GM12878 (cell line): ENCODE measurements at regions of chrX and their contacts with region 1.

Region 1: DNA sequence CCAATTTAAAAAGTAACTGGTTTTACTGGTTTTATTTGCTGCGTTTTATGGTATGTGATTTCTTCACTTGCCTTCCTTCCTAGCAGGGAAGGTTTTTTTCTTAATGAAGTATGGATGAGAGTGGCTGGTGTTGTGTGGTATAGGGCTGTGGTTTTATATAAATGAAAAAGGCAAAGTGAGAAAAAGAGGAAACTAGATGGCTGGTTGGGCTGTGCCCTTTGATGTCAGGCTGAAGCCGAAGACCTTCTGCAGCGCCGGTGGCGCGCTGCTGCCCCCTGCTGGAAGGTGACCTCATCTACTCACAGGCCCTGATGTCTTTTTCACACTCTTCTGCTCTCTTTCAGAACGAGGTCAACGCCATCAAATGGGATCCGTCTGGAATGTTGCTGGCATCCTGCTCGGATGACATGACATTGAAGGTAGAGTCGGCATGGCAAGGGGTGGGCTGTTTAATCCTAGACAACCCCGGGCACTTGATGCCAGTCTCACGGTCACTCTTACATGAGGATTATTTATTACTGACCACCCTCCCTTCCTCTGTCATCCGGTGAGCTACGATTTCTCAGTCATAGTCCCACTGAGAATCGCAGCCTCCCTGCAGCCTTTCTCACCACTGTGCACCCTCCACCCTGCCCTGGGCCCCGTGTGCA is 56.6 kb downstream of the GPR143 start:
- DNase-seq: peak; percentile 42
- ATAC-seq: peak; percentile 95
- H3K4me3 ChIP-seq: no peak overlapping the region
- H3K27ac ChIP-seq: no peak overlapping the region
- H3K4me1 ChIP-seq: no peaks in the 10 kb centered on the region
- H3K27me3 ChIP-seq: no peaks in the 10 kb centered on the region
- CTCF ChIP-seq: peak; percentile 81 to 91 (median 83)
- EP300 ChIP-seq: no peak
- POLR2A ChIP-seq: no peak
- RAD21 ChIP-seq: peak; percentile 91

Region 2: GRCh38 chrX:7996414-7996813 is 1712.6 kb before region 1 on chrX:
- CTCF ChIA-PET with region 1: no interaction called
- POLR2A ChIA-PET with region 1: no interaction called
- RAD21 ChIA-PET with region 1: no interaction called
- SMC1A ChIA-PET with region 1: no interaction called
- in situ Hi-C with region 1: loop called (anchors 25 kb)
- intact Hi-C with region 1: no loop called
- DNase-seq: no peak
- ATAC-seq: peak; percentile 91
- H3K4me3 ChIP-seq: no peak overlapping the region
- H3K27ac ChIP-seq: no peak overlapping the region
- H3K4me1 ChIP-seq: no peaks in the 10 kb centered on the region
- H3K27me3 ChIP-seq: no peaks in the 10 kb centered on the region
- CTCF ChIP-seq: peak; percentile 44 to 75 (median 54); a peak in 5 of 6 replicates
- EP300 ChIP-seq: no peak
- POLR2A ChIP-seq: no peak
- RAD21 ChIP-seq: peak; percentile 84

Region 3: GRCh38 chrX:8820910-8821527 is 888.0 kb before region 1 on chrX:
- CTCF ChIA-PET with region 1: interaction called, 5 read pairs
- POLR2A ChIA-PET with region 1: no interaction called
- RAD21 ChIA-PET with region 1: no interaction called
- SMC1A ChIA-PET with region 1: interaction called, 5 read pairs
- in situ Hi-C with region 1: loop called (anchors 5 kb)
- intact Hi-C with region 1: loop called (anchors 1 kb)
- DNase-seq: no peak
- ATAC-seq: no peak
- H3K4me3 ChIP-seq: no peak overlapping the region
- H3K27ac ChIP-seq: no peak overlapping the region
- H3K4me1 ChIP-seq: no peaks in the 10 kb centered on the region
- H3K27me3 ChIP-seq: no peaks in the 10 kb centered on the region
- CTCF ChIP-seq: no peak
- EP300 ChIP-seq: no peak
- POLR2A ChIP-seq: no peak
- RAD21 ChIP-seq: no peak

Region 4: GRCh38 chrX:9352694-9353411 is 356.2 kb before region 1 on chrX:
- CTCF ChIA-PET with region 1: interaction called, 4 read pairs
- POLR2A ChIA-PET with region 1: no interaction called
- RAD21 ChIA-PET with region 1: no interaction called
- SMC1A ChIA-PET with region 1: no interaction called
- in situ Hi-C with region 1: loop called (anchors 10 kb)
- intact Hi-C with region 1: loop called (anchors 5 kb)
- DNase-seq: peak; percentile 38
- ATAC-seq: peak; percentile 87
- H3K4me3 ChIP-seq: peak overlapping the region; percentile 15; the same call in 1 of the 2 replicates
- H3K27ac ChIP-seq: peak overlapping the region; percentile 79
- H3K4me1 ChIP-seq: peaks cover 5% of the 10 kb centered on the region; the same call in 1 of the 2 replicates
- H3K27me3 ChIP-seq: no peaks in the 10 kb centered on the region
- CTCF ChIP-seq: no peak
- EP300 ChIP-seq: peak in 1 of 2 experiments; percentile 50; a peak in 2 of 4 replicates
- POLR2A ChIP-seq: 0 out of 2 replicates have a peak, but pooled peaks have one; percentile 15
- RAD21 ChIP-seq: no peak

Region 5: GRCh38 chrX:9532349-9532748 is 176.7 kb before region 1 on chrX:
- CTCF ChIA-PET with region 1: no interaction called
- POLR2A ChIA-PET with region 1: no interaction called
- RAD21 ChIA-PET with region 1: no interaction called
- SMC1A ChIA-PET with region 1: no interaction called
- in situ Hi-C with region 1: no loop called
- intact Hi-C with region 1: loop called (anchors 2 kb)
- DNase-seq: no peak
- ATAC-seq: no peak
- H3K4me3 ChIP-seq: no peak overlapping the region
- H3K27ac ChIP-seq: no peak overlapping the region
- H3K4me1 ChIP-seq: no peaks in the 10 kb centered on the region
- H3K27me3 ChIP-seq: no peaks in the 10 kb centered on the region
- CTCF ChIP-seq: no peak
- EP300 ChIP-seq: no peak
- POLR2A ChIP-seq: no peak
- RAD21 ChIP-seq: no peak

Region 6: DNA sequence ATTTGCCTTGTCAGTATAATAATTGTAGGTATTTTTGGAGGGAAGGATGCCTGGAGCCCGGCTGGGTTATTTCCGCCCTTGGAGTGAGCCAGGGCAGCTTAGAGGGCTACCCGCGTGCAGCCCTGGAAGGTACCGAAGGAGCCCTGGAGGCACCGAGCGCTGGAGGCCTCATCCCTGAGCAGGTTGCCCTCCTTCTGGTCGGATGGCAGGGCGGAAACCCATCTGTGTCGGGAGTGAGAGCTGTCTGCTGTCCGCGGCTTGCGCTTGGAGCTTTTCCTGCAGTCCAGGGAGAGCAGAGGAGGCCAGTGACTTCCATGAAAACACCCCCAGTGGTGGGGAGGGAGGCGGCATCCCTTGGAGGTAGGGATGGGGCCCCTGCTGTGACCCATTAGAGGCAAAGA is 122.0 kb before region 1 on chrX:
- CTCF ChIA-PET with region 1: no interaction called
- POLR2A ChIA-PET with region 1: no interaction called
- RAD21 ChIA-PET with region 1: no interaction called
- SMC1A ChIA-PET with region 1: no interaction called
- in situ Hi-C with region 1: no loop called
- intact Hi-C with region 1: no loop called
- DNase-seq: no peak
- ATAC-seq: no peak
- H3K4me3 ChIP-seq: no peak overlapping the region
- H3K27ac ChIP-seq: no peak overlapping the region
- H3K4me1 ChIP-seq: no peaks in the 10 kb centered on the region
- H3K27me3 ChIP-seq: no peaks in the 10 kb centered on the region
- CTCF ChIP-seq: no peak
- EP300 ChIP-seq: no peak
- POLR2A ChIP-seq: no peak
- RAD21 ChIP-seq: no peak